Endothelial cell of umbilical vein (primary cell): ENCODE measurements at regions of chr19 and their contacts with region 1.

Region 1: GRCh38 chr19:8355631-8356402 is 8.1 kb upstream of the ANGPTL4 start:
- DNase-seq: peak; percentile 97
- H3K4me3 ChIP-seq: no peak overlapping the region
- H3K27ac ChIP-seq: peak overlapping the region; percentile 90
- H3K4me1 ChIP-seq: peaks cover 28% of the 10 kb centered on the region
- H3K27me3 ChIP-seq: no peaks in the 10 kb centered on the region
- CTCF ChIP-seq: no peak
- POLR2A ChIP-seq: peak; percentile 62

Region 2: GRCh38 chr19:8342684-8343482 is 12.9 kb before region 1 on chr19 and contains the start of gene KANK3:
- CTCF ChIA-PET with region 1: interaction called, 20 read pairs
- POLR2A ChIA-PET with region 1: interaction called, 4 read pairs
- dilution Hi-C with region 1: no loop called
- intact Hi-C with region 1: no loop called
- DNase-seq: peak; percentile 94
- H3K4me3 ChIP-seq: peak within 1 kb of the TSS; percentile 52 to 65 (median 61)
- H3K27ac ChIP-seq: peak within 1 kb of the TSS; percentile 80
- H3K4me1 ChIP-seq: peaks cover 26% of the 10 kb centered on the region
- H3K27me3 ChIP-seq: no peaks in the 10 kb centered on the region
- CTCF ChIP-seq: no peak
- POLR2A ChIP-seq: peak; percentile 88
- total RNA-seq, gene KANK3: 26.3 and 30.0 TPM in 2 replicates

Region 3: GRCh38 chr19:8396563-8397203 is 40.9 kb after region 1 on chr19:
- CTCF ChIA-PET with region 1: interaction called, 79 read pairs
- POLR2A ChIA-PET with region 1: interaction called, 8 read pairs
- dilution Hi-C with region 1: no loop called
- intact Hi-C with region 1: loop called (anchors 1 kb)
- DNase-seq: peak; percentile 74
- H3K4me3 ChIP-seq: no peak overlapping the region
- H3K27ac ChIP-seq: peak overlapping the region; percentile 23
- H3K4me1 ChIP-seq: peaks cover 28% of the 10 kb centered on the region
- H3K27me3 ChIP-seq: no peaks in the 10 kb centered on the region
- CTCF ChIP-seq: peak; percentile 75 to 91
- POLR2A ChIP-seq: no peak

Region 4: GRCh38 chr19:8423817-8424223 is 68.0 kb after region 1 on chr19:
- CTCF ChIA-PET with region 1: interaction called, 21 read pairs
- POLR2A ChIA-PET with region 1: interaction called, 4 read pairs
- dilution Hi-C with region 1: no loop called
- intact Hi-C with region 1: no loop called
- DNase-seq: peak; percentile 96
- H3K4me3 ChIP-seq: peak overlapping the region in 1 of 3 experiments; percentile 7
- H3K27ac ChIP-seq: peak overlapping the region; percentile 97
- H3K4me1 ChIP-seq: peaks cover 13% of the 10 kb centered on the region
- H3K27me3 ChIP-seq: no peaks in the 10 kb centered on the region
- CTCF ChIP-seq: no peak
- POLR2A ChIP-seq: no peak

Region 5: DNA sequence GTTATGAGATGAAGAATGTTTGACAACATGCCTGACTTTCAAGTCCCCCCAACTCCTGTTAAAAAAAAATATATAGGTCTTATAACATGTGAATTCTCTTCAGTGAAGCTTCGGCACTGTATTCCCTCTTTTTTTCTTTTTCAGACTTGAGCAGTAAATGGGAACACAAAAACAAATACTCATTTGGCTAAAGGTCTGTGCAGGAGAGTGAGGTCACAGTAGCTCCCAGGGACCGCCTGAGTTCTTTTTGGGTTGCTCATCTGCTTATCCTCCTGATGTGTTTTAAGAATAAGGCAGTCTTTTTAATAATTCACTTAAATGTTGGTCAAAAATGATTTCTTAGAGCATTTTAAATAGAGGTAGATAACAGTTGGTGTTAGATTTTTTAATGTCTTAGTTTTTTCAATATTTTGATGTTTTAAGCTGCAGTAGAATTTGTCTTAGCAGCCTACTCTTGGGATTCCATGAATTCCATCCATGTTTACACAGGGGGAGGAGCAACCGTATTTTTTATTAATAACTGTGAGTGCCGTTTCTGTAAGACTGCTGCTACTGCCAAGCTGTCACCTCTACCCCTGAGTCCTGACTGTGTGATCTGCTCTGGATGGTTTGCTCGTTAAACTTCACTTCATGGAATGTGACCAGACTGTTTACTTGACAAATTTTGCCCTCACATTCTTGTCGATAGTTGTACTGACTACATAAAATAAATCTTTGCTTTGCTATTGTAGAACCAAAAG is 103.9 kb after region 1 on chr19:
- CTCF ChIA-PET with region 1: interaction called, 29 read pairs
- POLR2A ChIA-PET with region 1: interaction called, 3 read pairs
- dilution Hi-C with region 1: no loop called
- intact Hi-C with region 1: no loop called
- DNase-seq: peak; percentile 43
- H3K4me3 ChIP-seq: no peak overlapping the region
- H3K27ac ChIP-seq: peak overlapping the region; percentile 29
- H3K4me1 ChIP-seq: peaks cover 32% of the 10 kb centered on the region
- H3K27me3 ChIP-seq: no peaks in the 10 kb centered on the region
- CTCF ChIP-seq: no peak
- POLR2A ChIP-seq: no peak

Region 6: DNA sequence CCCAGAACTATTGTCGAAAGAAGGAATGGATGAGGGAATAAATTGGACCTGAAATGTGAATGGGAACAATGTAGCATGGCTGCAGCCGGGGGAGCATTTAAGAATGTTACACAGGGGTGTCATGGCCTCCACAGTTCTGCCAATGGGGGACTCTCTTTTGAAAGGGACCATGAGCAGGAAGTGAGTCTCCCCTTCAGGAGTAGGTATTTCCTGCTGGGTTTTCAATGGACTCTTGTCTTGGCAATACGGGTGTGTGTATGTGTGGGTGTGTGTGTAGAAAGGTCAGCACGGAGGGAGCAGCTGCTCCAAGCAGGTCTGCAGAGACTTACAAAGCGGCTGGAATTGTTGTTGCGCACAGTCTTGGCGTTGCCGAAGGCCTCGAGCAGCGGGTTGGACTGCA is 197.0 kb after region 1 on chr19:
- CTCF ChIA-PET with region 1: no interaction called
- POLR2A ChIA-PET with region 1: no interaction called
- dilution Hi-C with region 1: no loop called
- intact Hi-C with region 1: no loop called
- DNase-seq: no peak
- H3K4me3 ChIP-seq: no peak overlapping the region
- H3K27ac ChIP-seq: no peak overlapping the region
- H3K4me1 ChIP-seq: no peaks in the 10 kb centered on the region
- H3K27me3 ChIP-seq: no peaks in the 10 kb centered on the region
- CTCF ChIP-seq: no peak
- POLR2A ChIP-seq: no peak

Region 7: DNA sequence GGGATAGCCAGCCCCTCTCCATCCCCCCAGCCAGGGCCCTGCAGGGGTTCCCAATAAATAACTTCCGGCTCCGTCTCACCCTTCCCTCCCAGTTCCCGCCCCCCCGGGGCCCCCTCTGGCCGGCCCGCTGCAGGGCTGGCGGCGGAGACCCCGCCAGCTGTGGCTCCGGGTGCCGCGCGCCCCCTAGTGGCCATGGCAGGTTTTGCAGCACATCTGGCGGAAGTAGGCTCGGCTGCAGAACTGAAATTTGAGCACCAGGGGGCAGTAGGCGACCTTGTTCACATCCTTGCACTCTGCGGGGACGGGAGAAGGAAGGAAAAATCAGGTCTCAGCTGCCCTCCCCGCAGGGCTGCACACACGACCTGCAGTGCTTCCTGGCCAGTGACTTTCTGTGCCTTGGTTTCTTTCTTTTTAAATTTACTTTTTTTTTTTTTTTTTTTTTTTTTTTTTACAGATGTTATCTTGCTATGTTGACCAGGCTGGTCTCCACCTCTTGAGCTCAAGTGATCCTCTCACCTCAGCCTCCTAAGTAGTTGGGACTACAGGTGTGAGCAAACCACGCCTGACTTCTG is 225.0 kb after region 1 on chr19:
- CTCF ChIA-PET with region 1: interaction called, 9 read pairs
- POLR2A ChIA-PET with region 1: no interaction called
- dilution Hi-C with region 1: no loop called
- intact Hi-C with region 1: loop called (anchors 1 kb)
- DNase-seq: peak; percentile 57
- H3K4me3 ChIP-seq: no peak overlapping the region
- H3K27ac ChIP-seq: no peak overlapping the region
- H3K4me1 ChIP-seq: no peaks in the 10 kb centered on the region
- H3K27me3 ChIP-seq: peaks cover 0 to 4% of the 10 kb centered on the region in 2 experiments
- CTCF ChIP-seq: peak; percentile 99 to 100
- POLR2A ChIP-seq: no peak